ENCODE measurements at regions of chr4 and their contacts with region 1.

Region 1: GRCh38 chr4:36399762-36400353 is 118.4 kb downstream of the DTHD1 start:
- DNase-seq: peak; percentile 24
- ATAC-seq: peak; percentile 82
- H3K4me3 ChIP-seq: no peak overlapping the region
- H3K27ac ChIP-seq: no peak overlapping the region
- H3K4me1 ChIP-seq: no peaks in the 10 kb centered on the region; the same call in 1 of the 2 replicates
- H3K27me3 ChIP-seq: no peaks in the 10 kb centered on the region
- CTCF ChIP-seq: peak; percentile 68 to 85 (median 73)
- EP300 ChIP-seq: no peak
- POLR2A ChIP-seq: no peak
- RAD21 ChIP-seq: peak; percentile 99

Region 2: DNA sequence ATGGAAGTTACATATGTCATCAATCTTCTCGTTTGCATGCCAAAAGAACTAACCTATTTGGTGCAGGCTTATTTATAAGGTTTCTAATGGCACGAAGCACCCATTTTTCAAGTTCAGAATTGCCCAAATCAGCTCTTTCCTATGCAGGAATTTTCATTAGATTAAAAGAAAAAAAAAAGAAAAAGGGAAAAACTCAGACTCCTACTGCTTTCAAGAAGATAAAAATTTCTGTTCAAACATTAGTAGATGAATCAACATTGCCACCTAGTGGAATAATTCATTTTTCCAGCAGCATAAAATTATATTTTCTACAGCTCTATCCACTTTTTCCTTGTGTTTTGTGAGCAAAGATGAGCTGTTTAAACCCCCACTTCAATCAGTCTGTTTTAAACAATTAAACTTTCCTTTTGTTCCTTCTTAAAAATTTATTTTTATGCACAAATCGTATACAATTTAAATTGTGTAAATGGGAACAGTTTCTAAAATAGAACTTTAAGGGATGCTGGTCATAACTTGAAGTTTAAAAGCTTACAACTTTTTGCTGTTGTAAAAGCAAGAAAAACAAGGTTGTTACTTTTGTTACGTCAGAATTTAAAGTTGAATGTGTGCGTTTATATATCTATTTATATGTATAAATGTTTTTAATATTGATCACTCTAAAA is 465.4 kb before region 1 on chr4:
- CTCF ChIA-PET with region 1: interaction called, 7 read pairs
- POLR2A ChIA-PET with region 1: no interaction called
- RAD21 ChIA-PET with region 1: interaction called, 3 read pairs
- SMC1A ChIA-PET with region 1: interaction called, 10 read pairs
- in situ Hi-C with region 1: no loop called
- intact Hi-C with region 1: no loop called
- DNase-seq: peak; percentile 21
- ATAC-seq: peak; percentile 46
- H3K4me3 ChIP-seq: no peak overlapping the region
- H3K27ac ChIP-seq: no peak overlapping the region
- H3K4me1 ChIP-seq: no peaks in the 10 kb centered on the region
- H3K27me3 ChIP-seq: no peaks in the 10 kb centered on the region
- CTCF ChIP-seq: peak; percentile 34 to 58 (median 43); a peak in 4 of 6 replicates
- EP300 ChIP-seq: no peak
- POLR2A ChIP-seq: no peak
- RAD21 ChIP-seq: peak; percentile 70

Region 3: DNA sequence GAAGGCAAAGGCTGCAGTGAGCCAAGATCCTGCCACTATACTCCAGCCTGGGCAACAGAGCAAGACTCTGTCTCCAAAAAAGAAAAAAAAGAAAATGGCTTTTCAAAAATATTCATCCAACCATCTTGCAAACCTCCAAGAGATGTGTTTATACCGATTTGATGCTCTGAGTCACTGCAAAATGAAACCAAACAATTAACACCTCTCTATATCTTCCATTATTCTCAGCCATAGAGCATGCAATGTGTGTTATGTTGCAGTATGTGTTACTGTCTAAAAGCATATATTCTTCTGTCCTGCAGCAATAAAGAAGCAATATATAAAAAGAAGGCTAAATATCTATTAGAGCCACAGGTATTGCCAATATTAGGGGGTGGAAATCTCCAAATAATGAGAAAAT is 206.9 kb before region 1 on chr4:
- CTCF ChIA-PET with region 1: interaction called, 6 read pairs
- POLR2A ChIA-PET with region 1: no interaction called
- RAD21 ChIA-PET with region 1: interaction called, 10 read pairs
- SMC1A ChIA-PET with region 1: interaction called, 24 read pairs
- in situ Hi-C with region 1: no loop called
- intact Hi-C with region 1: loop called (anchors 5 kb)
- DNase-seq: no peak
- ATAC-seq: no peak
- H3K4me3 ChIP-seq: no peak overlapping the region
- H3K27ac ChIP-seq: no peak overlapping the region
- H3K4me1 ChIP-seq: peaks cover 4% of the 10 kb centered on the region; the same call in 1 of the 2 replicates
- H3K27me3 ChIP-seq: no peaks in the 10 kb centered on the region
- CTCF ChIP-seq: no peak
- EP300 ChIP-seq: no peak
- POLR2A ChIP-seq: no peak
- RAD21 ChIP-seq: no peak

Region 4: GRCh38 chr4:36285784-36286480 is 113.9 kb before region 1 on chr4:
- CTCF ChIA-PET with region 1: interaction called, 5 read pairs
- POLR2A ChIA-PET with region 1: no interaction called
- RAD21 ChIA-PET with region 1: interaction called, 6 read pairs
- SMC1A ChIA-PET with region 1: interaction called, 11 read pairs
- in situ Hi-C with region 1: no loop called
- intact Hi-C with region 1: no loop called
- DNase-seq: peak; percentile 93
- ATAC-seq: peak; percentile 99
- H3K4me3 ChIP-seq: peak overlapping the region; percentile 38
- H3K27ac ChIP-seq: peak overlapping the region; percentile 54
- H3K4me1 ChIP-seq: peaks cover 7% of the 10 kb centered on the region; the same call in 1 of the 2 replicates
- H3K27me3 ChIP-seq: no peaks in the 10 kb centered on the region
- CTCF ChIP-seq: no peak
- EP300 ChIP-seq: peak; percentile 90 to 98
- POLR2A ChIP-seq: no peak
- RAD21 ChIP-seq: peak; percentile 42

Region 5: DNA sequence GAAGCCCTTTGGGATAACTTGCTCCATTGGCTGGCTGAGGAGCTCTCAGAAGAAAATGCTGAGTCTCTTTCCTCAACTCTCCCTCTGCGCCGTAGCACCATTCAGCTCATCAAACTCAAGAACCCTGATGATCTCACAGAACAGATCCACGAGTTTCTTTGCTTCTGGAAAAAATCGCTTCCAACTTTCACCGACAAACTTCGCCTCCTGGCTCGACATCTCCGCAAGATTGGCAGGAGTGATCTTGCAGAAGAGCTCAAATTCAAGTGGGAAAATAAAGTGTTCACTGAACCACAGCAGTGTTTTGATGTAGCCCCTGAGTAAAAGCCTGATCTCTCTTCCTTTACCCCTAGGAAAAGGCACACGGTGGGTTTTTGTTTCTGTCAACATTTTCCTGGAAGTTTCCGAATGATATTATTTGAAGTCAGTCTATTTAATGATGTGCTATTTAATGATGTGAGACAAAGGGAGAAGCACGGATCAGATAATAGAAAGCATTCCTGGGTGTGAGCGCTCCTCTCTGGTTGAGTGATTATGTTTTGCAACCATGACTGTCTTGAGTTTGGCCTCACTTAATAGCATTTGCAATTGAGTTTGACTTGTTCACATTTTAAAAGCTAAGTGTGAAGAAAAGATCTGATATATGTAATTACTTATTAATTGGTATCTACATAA is 56.2 kb before region 1 on chr4:
- CTCF ChIA-PET with region 1: interaction called, 131 read pairs
- POLR2A ChIA-PET with region 1: no interaction called
- RAD21 ChIA-PET with region 1: interaction called, 83 read pairs
- SMC1A ChIA-PET with region 1: interaction called, 95 read pairs
- in situ Hi-C with region 1: no loop called
- intact Hi-C with region 1: no loop called
- DNase-seq: no peak
- ATAC-seq: no peak
- H3K4me3 ChIP-seq: no peak overlapping the region
- H3K27ac ChIP-seq: no peak overlapping the region
- H3K4me1 ChIP-seq: peaks cover 4% of the 10 kb centered on the region; the same call in 1 of the 2 replicates
- H3K27me3 ChIP-seq: no peaks in the 10 kb centered on the region
- CTCF ChIP-seq: no peak
- EP300 ChIP-seq: no peak
- POLR2A ChIP-seq: no peak
- RAD21 ChIP-seq: no peak

Region 6: DNA sequence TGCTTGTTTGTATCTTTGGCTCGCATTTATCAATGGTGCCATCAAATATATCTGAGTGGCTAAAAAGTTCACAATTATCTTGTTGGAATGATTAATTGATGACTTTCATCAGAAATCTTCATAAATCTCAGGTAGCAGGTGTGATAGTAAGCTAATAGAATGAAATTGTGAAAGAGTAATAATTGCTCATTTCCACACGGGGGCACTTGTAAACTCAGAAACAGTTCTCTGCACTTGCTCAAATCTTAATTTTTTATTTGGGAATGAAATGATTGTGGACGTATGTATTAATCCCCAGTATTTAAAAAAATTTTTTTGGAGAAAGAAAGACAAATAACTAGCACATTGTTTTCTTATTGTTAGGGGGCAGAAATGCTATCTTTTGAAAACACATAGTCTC is 14.4 kb after region 1 on chr4:
- CTCF ChIA-PET with region 1: interaction called, 12 read pairs
- POLR2A ChIA-PET with region 1: no interaction called
- RAD21 ChIA-PET with region 1: interaction called, 7 read pairs
- SMC1A ChIA-PET with region 1: interaction called, 10 read pairs
- in situ Hi-C with region 1: no loop called
- intact Hi-C with region 1: no loop called
- DNase-seq: no peak
- ATAC-seq: peak; percentile 61
- H3K4me3 ChIP-seq: no peak overlapping the region
- H3K27ac ChIP-seq: no peak overlapping the region
- H3K4me1 ChIP-seq: no peaks in the 10 kb centered on the region
- H3K27me3 ChIP-seq: no peaks in the 10 kb centered on the region
- CTCF ChIP-seq: peak; percentile 30 to 56 (median 34); a peak in 4 of 6 replicates
- EP300 ChIP-seq: no peak
- POLR2A ChIP-seq: no peak
- RAD21 ChIP-seq: peak; percentile 79

Region 7: DNA sequence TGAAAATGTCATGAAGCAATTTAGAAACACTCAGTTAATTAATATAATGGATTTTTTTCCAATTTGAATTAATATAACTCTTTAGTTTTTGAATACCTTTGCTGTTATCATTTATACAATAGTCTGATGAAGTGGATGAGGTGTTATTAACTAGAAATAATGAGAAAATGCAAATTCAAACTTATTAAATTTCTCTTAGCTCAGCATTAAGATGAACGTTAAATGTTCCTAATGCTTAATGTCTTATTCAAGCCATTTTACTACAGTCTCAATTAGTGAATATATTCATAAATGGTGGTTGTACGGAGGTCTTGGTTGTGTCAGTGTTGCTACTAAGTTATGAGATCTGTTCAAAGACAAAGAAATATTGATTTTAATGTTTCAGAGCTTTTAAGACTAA is 67.8 kb after region 1 on chr4:
- CTCF ChIA-PET with region 1: no interaction called
- POLR2A ChIA-PET with region 1: no interaction called
- RAD21 ChIA-PET with region 1: no interaction called
- SMC1A ChIA-PET with region 1: no interaction called
- in situ Hi-C with region 1: no loop called
- intact Hi-C with region 1: no loop called
- DNase-seq: no peak
- ATAC-seq: no peak
- H3K4me3 ChIP-seq: no peak overlapping the region
- H3K27ac ChIP-seq: no peak overlapping the region
- H3K4me1 ChIP-seq: no peaks in the 10 kb centered on the region
- H3K27me3 ChIP-seq: no peaks in the 10 kb centered on the region
- CTCF ChIP-seq: no peak
- EP300 ChIP-seq: no peak
- POLR2A ChIP-seq: no peak
- RAD21 ChIP-seq: no peak

Region 8: DNA sequence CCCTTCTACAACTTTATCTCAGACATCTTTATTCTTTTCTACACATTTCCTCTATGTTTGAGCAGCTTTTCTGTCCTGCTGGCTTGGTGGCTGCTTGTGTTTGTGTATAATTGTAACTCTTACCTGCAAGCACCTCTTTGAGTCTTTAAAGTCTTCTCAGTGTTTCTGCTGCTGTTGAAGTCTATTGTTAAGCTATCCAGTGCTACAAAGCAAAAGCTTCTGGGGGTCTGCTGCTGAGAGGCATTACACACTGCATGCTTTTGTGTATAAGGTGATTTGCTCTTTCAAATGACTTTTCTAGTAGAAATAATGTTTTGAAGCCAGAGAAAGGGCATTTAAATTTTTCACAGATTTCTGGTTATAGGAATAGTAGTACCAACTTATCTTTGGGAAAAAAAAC is 123.3 kb after region 1 on chr4:
- CTCF ChIA-PET with region 1: no interaction called
- POLR2A ChIA-PET with region 1: no interaction called
- RAD21 ChIA-PET with region 1: no interaction called
- SMC1A ChIA-PET with region 1: no interaction called
- in situ Hi-C with region 1: no loop called
- intact Hi-C with region 1: no loop called
- DNase-seq: no peak
- ATAC-seq: no peak
- H3K4me3 ChIP-seq: no peak overlapping the region
- H3K27ac ChIP-seq: no peak overlapping the region
- H3K4me1 ChIP-seq: no peaks in the 10 kb centered on the region
- H3K27me3 ChIP-seq: no peaks in the 10 kb centered on the region
- CTCF ChIP-seq: no peak
- EP300 ChIP-seq: no peak
- POLR2A ChIP-seq: no peak
- RAD21 ChIP-seq: no peak